CD8-positive, alpha-beta T cell (primary cell): ENCODE measurements at regions of chr21 and their contacts with region 1.

Region 1: DNA sequence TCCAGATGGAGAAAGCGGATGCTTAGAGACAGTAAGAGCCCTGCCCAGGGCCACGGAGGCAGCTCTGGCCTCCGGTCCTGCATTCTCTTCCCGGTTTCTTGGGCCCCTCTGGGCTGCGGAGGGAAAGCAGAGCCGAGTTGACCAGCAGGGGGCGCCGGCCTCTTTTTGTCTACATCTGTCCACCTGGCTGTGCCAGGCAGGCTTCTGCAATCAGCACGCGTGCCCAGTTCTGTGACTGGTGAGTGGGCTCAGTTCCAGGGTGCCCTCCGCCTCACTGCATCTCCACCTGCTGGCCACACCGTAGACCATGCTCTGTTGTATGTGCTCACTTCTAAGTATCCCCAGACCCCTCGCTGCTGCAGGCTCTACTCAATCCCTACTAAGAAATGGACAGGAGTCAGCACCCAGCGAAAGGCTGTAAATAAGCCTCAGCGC is 6.7 kb upstream of the HUNK start:
- DNase-seq: peak; percentile 36 to 82 (median 66)
- ATAC-seq: peak; percentile 62
- H3K4me3 ChIP-seq: no peak overlapping the region
- H3K4me3 Mint-ChIP-seq: no peak overlapping the region
- H3K27ac ChIP-seq: no peak overlapping the region
- H3K27ac Mint-ChIP-seq: no peak overlapping the region
- H3K4me1 ChIP-seq: no peaks in the 10 kb centered on the region
- H3K4me1 Mint-ChIP-seq: no peaks in the 10 kb centered on the region
- H3K27me3 ChIP-seq: peaks cover 0 to 7% of the 10 kb centered on the region in 2 experiments
- H3K27me3 Mint-ChIP-seq: peaks cover 23% of the 10 kb centered on the region
- CTCF ChIP-seq: peak; percentile 76

Region 2: GRCh38 chr21:31846690-31847089 is 19.4 kb before region 1 on chr21:
- CTCF ChIA-PET with region 1: no interaction called
- POLR2A ChIA-PET with region 1: no interaction called
- intact Hi-C with region 1: no loop called
- DNase-seq: no peak
- ATAC-seq: no peak
- H3K4me3 ChIP-seq: no peak overlapping the region
- H3K4me3 Mint-ChIP-seq: no peak overlapping the region
- H3K27ac ChIP-seq: no peak overlapping the region
- H3K27ac Mint-ChIP-seq: no peak overlapping the region
- H3K4me1 ChIP-seq: no peaks in the 10 kb centered on the region
- H3K4me1 Mint-ChIP-seq: no peaks in the 10 kb centered on the region
- H3K27me3 ChIP-seq: no peaks in the 10 kb centered on the region
- H3K27me3 Mint-ChIP-seq: peaks cover 29% of the 10 kb centered on the region
- CTCF ChIP-seq: no peak

Region 3: DNA sequence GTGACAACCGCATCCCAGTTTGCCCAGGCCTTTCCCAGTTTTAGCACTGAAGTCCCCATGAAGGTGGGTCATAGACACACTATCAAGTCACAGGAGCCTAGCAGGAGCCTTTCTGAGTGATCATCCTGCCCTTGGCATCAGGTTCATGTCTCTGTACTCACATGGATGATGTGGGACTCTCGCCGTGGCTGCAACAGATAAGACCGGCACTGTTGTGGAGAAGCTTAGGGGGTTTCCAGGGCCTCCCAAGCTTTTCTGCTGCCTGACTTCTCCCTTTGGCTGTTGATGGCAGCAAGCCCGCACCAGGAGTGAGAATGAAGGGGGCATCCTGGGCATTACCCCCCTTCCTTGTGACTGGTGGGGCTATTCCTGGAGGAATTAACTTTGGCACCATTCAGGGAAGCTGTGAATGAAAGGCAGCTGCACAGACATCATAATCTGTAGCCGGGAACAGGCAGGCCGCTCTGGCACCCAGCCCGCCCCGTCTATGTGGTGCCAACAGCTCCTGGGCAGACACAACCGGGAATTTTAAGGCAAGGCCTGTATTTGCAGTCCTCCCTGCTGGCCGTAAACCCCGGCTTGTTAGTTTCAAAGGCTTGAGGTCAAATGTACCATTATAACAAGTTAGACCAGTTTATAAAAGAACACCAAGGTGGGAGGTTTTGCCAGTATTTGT is 155.4 kb after region 1 on chr21:
- CTCF ChIA-PET with region 1: interaction called, 8 read pairs
- POLR2A ChIA-PET with region 1: no interaction called
- intact Hi-C with region 1: loop called (anchors 2 to 5 kb)
- DNase-seq: no peak
- ATAC-seq: no peak
- H3K4me3 ChIP-seq: no peak overlapping the region
- H3K4me3 Mint-ChIP-seq: no peak overlapping the region
- H3K27ac ChIP-seq: no peak overlapping the region
- H3K27ac Mint-ChIP-seq: no peak overlapping the region
- H3K4me1 ChIP-seq: no peaks in the 10 kb centered on the region
- H3K4me1 Mint-ChIP-seq: no peaks in the 10 kb centered on the region
- H3K27me3 ChIP-seq: no peaks in the 10 kb centered on the region
- H3K27me3 Mint-ChIP-seq: no peaks in the 10 kb centered on the region
- CTCF ChIP-seq: no peak

Region 4: DNA sequence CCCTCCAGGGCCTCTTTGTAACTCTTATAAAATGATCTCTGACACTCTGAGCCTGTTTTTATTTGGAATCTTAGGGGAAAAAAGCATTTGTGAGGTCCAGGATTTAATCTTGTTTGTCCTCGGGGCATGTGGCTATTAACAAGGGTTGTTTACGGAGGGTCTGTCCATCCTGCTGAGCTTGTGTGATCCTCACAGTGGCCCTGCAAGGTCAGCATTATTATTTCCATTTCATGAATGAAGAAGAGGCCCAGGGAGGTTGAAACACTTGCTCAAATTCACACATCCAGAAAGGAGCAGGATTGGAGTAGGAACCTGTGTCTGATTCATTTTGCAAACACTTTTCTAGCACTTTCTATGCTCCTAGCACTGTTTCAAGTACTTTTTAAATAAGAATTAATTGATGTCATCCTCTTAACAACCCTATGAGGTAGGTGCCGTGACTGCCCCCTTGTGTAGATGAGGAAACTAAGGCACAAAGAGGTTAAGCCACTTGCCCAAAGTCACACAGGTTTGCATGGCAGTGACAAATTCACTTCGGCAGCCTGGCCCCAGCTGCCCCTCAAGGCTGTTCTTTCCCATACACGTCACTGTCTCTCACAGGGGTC is 233.8 kb after region 1 on chr21:
- CTCF ChIA-PET with region 1: interaction called, 3 read pairs
- POLR2A ChIA-PET with region 1: no interaction called
- intact Hi-C with region 1: loop called in 1 of 2 experiments (anchors 2 kb)
- DNase-seq: peak in 2 of 9 experiments; percentile 8 to 12
- ATAC-seq: no peak
- H3K4me3 ChIP-seq: no peak overlapping the region
- H3K4me3 Mint-ChIP-seq: no peak overlapping the region
- H3K27ac ChIP-seq: no peak overlapping the region
- H3K27ac Mint-ChIP-seq: no peak overlapping the region
- H3K4me1 ChIP-seq: no peaks in the 10 kb centered on the region
- H3K4me1 Mint-ChIP-seq: no peaks in the 10 kb centered on the region
- H3K27me3 ChIP-seq: no peaks in the 10 kb centered on the region
- H3K27me3 Mint-ChIP-seq: peaks cover 9% of the 10 kb centered on the region
- CTCF ChIP-seq: no peak

Region 5: DNA sequence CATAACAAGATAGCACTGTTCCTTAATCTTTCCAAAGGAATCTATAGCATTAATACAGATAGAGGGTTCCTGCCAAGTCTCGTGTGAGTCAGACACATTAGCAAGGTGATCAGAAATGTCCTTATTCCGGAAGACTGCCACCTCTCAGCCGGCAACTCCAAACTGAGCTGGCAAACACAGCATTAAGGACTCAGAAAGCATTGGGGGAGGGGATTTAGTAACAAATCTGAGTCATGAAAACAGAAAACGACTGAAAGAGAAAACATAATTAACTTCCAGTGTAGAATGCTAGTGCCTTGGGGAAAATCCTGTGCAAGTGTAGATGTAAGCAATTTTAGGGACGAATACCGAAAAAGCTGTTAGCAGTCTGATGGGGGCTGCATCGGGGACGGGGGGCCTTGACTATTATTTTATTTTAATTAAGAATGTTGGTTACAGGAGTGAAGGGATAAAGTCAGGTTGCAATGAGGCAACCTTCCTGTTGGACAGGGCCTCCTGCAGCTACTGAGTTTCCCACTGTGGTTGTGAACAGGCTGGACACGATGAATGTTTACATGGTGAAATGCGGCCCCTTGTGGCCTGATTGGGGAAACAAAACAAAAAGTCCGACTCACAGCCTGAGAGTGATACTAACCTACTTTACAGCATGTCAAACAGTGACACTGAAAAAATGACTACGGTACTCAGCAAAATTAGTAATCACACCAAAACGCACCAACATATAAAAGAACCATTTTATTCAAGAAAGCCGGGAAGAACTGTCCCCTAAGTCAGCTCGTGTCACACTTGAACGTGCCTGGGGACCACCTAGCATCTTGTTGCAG is 392.1 kb after region 1 on chr21:
- CTCF ChIA-PET with region 1: interaction called, 22 read pairs
- POLR2A ChIA-PET with region 1: no interaction called
- intact Hi-C with region 1: loop called in 1 of 2 experiments (anchors 1 kb)
- DNase-seq: peak in 6 of 9 experiments; percentile 9 to 55 (median 34)
- ATAC-seq: no peak
- H3K4me3 ChIP-seq: no peak overlapping the region
- H3K4me3 Mint-ChIP-seq: no peak overlapping the region
- H3K27ac ChIP-seq: no peak overlapping the region
- H3K27ac Mint-ChIP-seq: no peak overlapping the region
- H3K4me1 ChIP-seq: no peaks in the 10 kb centered on the region
- H3K4me1 Mint-ChIP-seq: peaks cover 3% of the 10 kb centered on the region
- H3K27me3 ChIP-seq: no peaks in the 10 kb centered on the region
- H3K27me3 Mint-ChIP-seq: peaks cover 10% of the 10 kb centered on the region
- CTCF ChIP-seq: peak; percentile 46